GM10248 (cell line): ENCODE measurements at regions of chr1 and their contacts with region 1.

Region 1: DNA sequence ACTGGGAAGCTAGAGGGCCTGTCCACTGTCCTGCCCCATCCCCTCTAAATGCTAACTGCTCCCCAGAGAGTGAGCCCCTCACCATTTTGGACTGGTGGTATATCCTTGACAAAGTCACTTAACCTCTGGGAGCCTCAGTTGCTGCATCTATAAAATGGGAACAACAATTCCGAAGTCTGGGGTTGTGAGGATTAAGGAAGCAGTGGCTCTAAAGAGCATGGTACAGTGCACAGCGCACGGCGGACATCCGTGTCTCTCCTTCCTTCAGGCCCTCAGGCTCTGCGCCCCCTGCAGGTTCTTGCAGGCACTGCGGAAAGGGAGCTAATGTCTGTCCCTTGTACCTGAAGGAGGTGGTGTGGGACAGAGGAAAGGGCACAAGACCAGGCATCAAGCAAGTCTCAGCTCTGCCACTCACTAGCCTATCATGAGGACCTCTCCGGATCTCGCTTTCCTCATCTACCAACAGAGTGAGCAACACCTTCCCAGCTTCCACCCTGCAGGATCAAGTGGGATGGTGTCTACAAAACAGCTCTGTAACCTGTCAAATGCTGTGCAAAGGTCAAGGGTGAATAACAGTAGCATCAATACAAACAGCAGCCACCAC is 20.1 kb downstream of the ECE1 start:
- DNase-seq: peak; percentile 81
- CTCF ChIP-seq: peak; percentile 98

Region 2: DNA sequence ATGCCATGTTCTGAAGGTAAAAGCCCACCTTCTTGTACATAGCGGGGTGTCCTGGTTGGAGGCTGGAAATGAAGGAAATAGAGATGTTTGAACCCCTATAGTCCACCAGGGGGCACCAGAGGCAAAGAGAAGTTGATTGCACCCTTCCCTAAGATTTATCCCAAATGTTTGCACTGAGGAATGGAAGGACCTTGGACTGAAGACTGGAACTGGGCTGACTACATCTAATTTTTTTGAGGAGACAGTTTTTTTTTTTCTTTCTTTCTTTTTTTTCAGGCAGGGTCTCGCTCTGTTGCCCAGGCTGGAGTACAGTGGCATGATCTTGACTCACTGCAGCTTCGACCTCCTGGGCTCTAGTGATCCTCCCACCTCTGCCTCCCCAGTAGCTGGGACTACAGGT is 38.1 kb before region 1 on chr1:
- CTCF ChIA-PET with region 1: interaction called, 35 read pairs
- POLR2A ChIA-PET with region 1: no interaction called
- DNase-seq: peak; percentile 62
- CTCF ChIP-seq: peak; percentile 60

Region 3: DNA sequence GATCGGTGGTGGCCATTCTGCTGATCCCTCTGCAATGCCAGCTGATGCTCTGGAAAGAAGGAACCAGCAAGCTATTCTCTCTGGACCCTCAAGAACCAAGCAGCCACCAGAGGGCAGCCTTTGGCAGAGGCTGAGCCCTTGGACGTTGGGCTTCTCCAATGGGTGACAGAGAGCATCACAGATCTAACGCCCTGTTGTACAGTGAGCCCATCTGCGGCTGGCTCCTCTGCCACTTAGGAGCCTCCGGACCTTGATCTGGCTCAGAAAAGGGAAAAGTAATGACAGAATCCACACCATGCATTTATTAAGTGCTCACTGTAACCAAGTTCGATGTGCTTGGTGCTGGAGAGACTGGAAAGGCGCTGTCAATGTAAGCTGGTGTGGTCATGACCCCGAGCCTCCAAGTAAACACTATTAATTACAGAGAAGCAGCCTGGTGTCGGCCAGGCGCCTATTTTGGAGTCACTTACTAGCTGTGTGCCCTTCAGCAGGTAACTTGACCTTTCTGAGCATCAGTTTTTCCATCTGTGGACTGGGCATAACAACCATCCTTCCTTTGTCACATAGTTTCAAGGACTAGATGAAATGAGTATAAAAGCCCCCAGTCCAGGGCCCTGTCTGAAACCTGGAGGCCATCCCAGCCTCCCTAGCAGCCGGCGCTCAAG is 14.8 kb before region 1 on chr1:
- CTCF ChIA-PET with region 1: interaction called, 196 read pairs
- POLR2A ChIA-PET with region 1: no interaction called
- DNase-seq: peak; percentile 81
- CTCF ChIP-seq: peak; percentile 92

Region 4: GRCh38 chr1:21299780-21300395 is 29.7 kb after region 1 on chr1:
- CTCF ChIA-PET with region 1: interaction called, 161 read pairs
- POLR2A ChIA-PET with region 1: interaction called, 3 read pairs
- DNase-seq: no peak
- CTCF ChIP-seq: no peak

Region 5: GRCh38 chr1:21334214-21335087 is 64.3 kb after region 1 on chr1:
- CTCF ChIA-PET with region 1: interaction called, 35 read pairs
- POLR2A ChIA-PET with region 1: no interaction called
- DNase-seq: peak; percentile 78
- CTCF ChIP-seq: peak; percentile 79